ENCODE measurements at regions of chr6 and their contacts with region 1.

Region 1: GRCh38 chr6:33029328-33030184 is 20.2 kb upstream of the HLA-DOA start:
- DNase-seq: peak; percentile 87 to 98 (median 89)
- H3K4me3 ChIP-seq: peak overlapping the region in 1 of 3 experiments; percentile 26
- H3K4me3 Mint-ChIP-seq: peak overlapping the region; percentile 35 to 61
- H3K27ac ChIP-seq: peak overlapping the region; percentile 91 to 96
- H3K27ac Mint-ChIP-seq: peak overlapping the region; percentile 94 to 100 (median 98)
- H3K4me1 ChIP-seq: peaks cover 36 to 37% of the 10 kb centered on the region in 2 donors
- H3K4me1 Mint-ChIP-seq: peaks cover 40% of the 10 kb centered on the region
- H3K27me3 ChIP-seq: no peaks in the 10 kb centered on the region
- H3K27me3 Mint-ChIP-seq: peaks cover 0 to 4% (median 0%) of the 10 kb centered on the region in 3 donors
- CTCF ChIP-seq: no peak

Region 2: GRCh38 chr6:32940656-32941213 is 88.8 kb before region 1 on chr6 and contains the start of gene HLA-DMB:
- intact Hi-C with region 1: no loop called
- DNase-seq: peak; percentile 77 to 95 (median 89)
- H3K4me3 ChIP-seq: peak within 1 kb of the TSS; percentile 83 to 97 (median 96)
- H3K4me3 Mint-ChIP-seq: peak within 1 kb of the TSS; percentile 94 to 95
- H3K27ac ChIP-seq: peak within 1 kb of the TSS; percentile 86 to 95
- H3K27ac Mint-ChIP-seq: peak within 1 kb of the TSS; percentile 98 to 99 (median 99)
- H3K4me1 ChIP-seq: peaks cover 89 to 95% of the 10 kb centered on the region in 2 donors
- H3K4me1 Mint-ChIP-seq: peaks cover 86% of the 10 kb centered on the region
- H3K27me3 ChIP-seq: no peaks in the 10 kb centered on the region
- H3K27me3 Mint-ChIP-seq: peaks cover 0 to 4% (median 3%) of the 10 kb centered on the region in 3 donors
- CTCF ChIP-seq: no peak
- polyA plus RNA-seq, gene HLA-DMB: 510 to 924 (median 726) TPM

Region 3: GRCh38 chr6:33014841-33015634 is 14.5 kb before region 1 on chr6:
- intact Hi-C with region 1: loop called in 1 of 2 experiments (anchors 1 kb)
- DNase-seq: peak; percentile 79 to 82 (median 82)
- H3K4me3 ChIP-seq: no peak overlapping the region
- H3K4me3 Mint-ChIP-seq: peak overlapping the region in 1 of 2 donors; percentile 61
- H3K27ac ChIP-seq: no peak overlapping the region
- H3K27ac Mint-ChIP-seq: peak overlapping the region in 2 of 7 donors; percentile 33 to 35
- H3K4me1 ChIP-seq: peaks cover 36 to 42% of the 10 kb centered on the region in 2 donors
- H3K4me1 Mint-ChIP-seq: peaks cover 41% of the 10 kb centered on the region
- H3K27me3 ChIP-seq: no peaks in the 10 kb centered on the region
- H3K27me3 Mint-ChIP-seq: no peaks in the 10 kb centered on the region
- CTCF ChIP-seq: peak; percentile 85

Region 4: GRCh38 chr6:33073431-33073871 is 43.9 kb after region 1 on chr6 and contains the start of gene HLA-DPA1:
- intact Hi-C with region 1: loop called in 1 of 2 experiments (anchors 5 kb)
- DNase-seq: peak; percentile 77 to 89 (median 88)
- H3K4me3 ChIP-seq: peak within 1 kb of the TSS; percentile 80 to 95 (median 86)
- H3K4me3 Mint-ChIP-seq: peak within 1 kb of the TSS; percentile 75 to 88
- H3K27ac ChIP-seq: peak within 1 kb of the TSS; percentile 77 to 88
- H3K27ac Mint-ChIP-seq: peak within 1 kb of the TSS; percentile 90 to 96 (median 94)
- H3K4me1 ChIP-seq: peaks cover 60 to 74% of the 10 kb centered on the region in 2 donors
- H3K4me1 Mint-ChIP-seq: peaks cover 74% of the 10 kb centered on the region
- H3K27me3 ChIP-seq: no peaks in the 10 kb centered on the region
- H3K27me3 Mint-ChIP-seq: peaks cover 0 to 2% (median 0%) of the 10 kb centered on the region in 3 donors
- CTCF ChIP-seq: no peak
- polyA plus RNA-seq, gene HLA-DPA1: 578 to 1,024 (median 796) TPM

Region 5: DNA sequence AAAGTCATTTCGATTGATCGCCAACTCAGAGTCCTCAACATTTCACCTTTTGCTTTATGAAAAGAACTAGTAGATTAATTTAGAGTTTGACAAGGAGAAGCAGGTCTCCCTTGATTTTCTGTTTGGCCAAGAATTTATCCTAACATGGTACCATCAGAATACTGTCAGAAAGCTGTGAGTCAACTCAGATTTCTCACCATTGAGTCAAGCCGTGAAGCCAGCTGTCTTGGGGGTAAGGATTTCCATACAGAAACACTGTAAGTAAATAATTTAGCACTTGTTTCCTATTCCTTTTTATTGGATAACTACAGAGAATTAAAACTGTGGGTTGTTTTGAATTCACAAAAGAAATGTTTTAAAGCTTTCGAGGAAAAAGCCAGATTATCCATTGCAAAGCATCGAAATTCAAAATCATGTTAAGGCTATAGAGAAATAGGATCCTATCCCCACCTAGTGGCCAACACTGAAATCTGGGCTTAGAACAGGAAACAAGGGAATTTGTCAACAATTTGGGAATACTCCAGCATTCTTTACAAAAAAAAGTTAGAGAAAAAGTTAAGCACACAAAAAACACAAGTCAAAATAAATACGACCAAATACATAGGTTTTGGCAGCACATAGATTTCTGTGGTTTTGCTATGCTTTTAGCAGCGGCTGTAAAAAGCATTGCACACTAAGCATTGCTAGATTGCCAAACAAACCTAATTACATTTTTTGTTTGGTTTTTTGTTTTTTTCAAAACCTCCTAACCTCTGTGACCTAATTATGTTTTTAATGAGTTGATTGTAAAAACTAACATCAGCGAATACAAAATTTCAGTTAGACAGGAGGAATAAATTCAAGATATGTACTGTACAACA is 118.5 kb after region 1 on chr6:
- intact Hi-C with region 1: loop called in 1 of 2 experiments (anchors 10 kb)
- DNase-seq: peak in 2 of 3 donors; percentile 44 to 52
- H3K4me3 ChIP-seq: no peak overlapping the region
- H3K4me3 Mint-ChIP-seq: no peak overlapping the region
- H3K27ac ChIP-seq: no peak overlapping the region
- H3K27ac Mint-ChIP-seq: no peak overlapping the region
- H3K4me1 ChIP-seq: peaks cover 21 to 22% of the 10 kb centered on the region in 2 donors
- H3K4me1 Mint-ChIP-seq: peaks cover 13% of the 10 kb centered on the region
- H3K27me3 ChIP-seq: peaks cover 5% of the 10 kb centered on the region in 2 donors
- H3K27me3 Mint-ChIP-seq: peaks cover 5 to 8% (median 6%) of the 10 kb centered on the region in 3 donors
- CTCF ChIP-seq: peak; percentile 83